K562 (cell line): ENCODE measurements at regions of chr2 and their contacts with region 1.

Region 1: DNA sequence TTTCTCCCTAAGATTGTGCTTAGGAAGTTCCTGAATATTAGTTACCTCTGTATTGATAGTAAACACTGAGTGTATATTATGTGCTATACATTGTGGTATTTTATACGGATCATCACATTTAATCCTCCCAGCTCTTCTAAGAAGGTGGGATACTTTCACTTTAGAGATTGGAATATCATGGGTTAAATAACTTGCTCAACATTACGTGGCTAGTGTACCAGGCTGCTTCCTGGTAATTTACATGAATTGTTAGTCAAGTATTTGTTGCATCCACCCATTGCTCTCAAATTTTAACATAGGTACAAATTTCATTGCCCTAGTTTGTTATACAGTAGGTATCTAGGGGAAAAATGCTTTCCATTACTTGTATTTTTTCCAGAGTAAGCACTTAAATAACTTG is 21.4 kb downstream of the FAM98A start:
- DNase-seq: no peak
- ATAC-seq: no peak
- H3K4me3 ChIP-seq: no peak overlapping the region
- H3K27ac ChIP-seq: no peak overlapping the region
- H3K4me1 ChIP-seq: no peaks in the 10 kb centered on the region
- H3K27me3 ChIP-seq: no peaks in the 10 kb centered on the region
- CTCF ChIP-seq: no peak
- EP300 ChIP-seq: no peak
- POLR2A ChIP-seq: no peak
- RAD21 ChIP-seq: no peak

Region 2: DNA sequence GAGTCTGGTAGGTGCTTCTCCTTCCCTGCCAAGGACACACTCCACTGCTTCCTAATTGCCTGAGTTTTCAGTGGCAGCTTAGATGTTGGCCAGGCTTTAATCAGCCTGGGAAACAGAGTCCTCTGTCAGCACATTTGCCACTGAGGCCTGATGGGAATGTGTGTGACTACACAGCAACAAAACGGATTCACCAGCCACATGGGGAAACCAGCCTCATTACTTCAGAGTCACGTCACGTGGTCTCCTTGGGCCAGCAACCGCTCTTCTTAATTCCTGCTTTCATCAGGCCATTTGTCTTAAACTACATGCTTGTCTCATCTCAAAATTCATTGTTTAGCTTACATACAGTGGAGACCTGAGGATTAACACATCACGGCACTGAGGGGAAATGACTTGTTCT is 724.8 kb before region 1 on chr2:
- CTCF ChIA-PET with region 1: no interaction called
- POLR2A ChIA-PET with region 1: no interaction called
- in situ Hi-C with region 1: no loop called
- intact Hi-C with region 1: no loop called
- DNase-seq: no peak
- ATAC-seq: no peak
- H3K4me3 ChIP-seq: no peak overlapping the region
- H3K27ac ChIP-seq: no peak overlapping the region
- H3K4me1 ChIP-seq: no peaks in the 10 kb centered on the region; a peak in 1 of 5 replicates
- H3K27me3 ChIP-seq: peaks cover 15 to 23% of the 10 kb centered on the region in 2 experiments; a peak in 4 of 5 replicates
- CTCF ChIP-seq: no peak
- EP300 ChIP-seq: no peak
- POLR2A ChIP-seq: no peak
- RAD21 ChIP-seq: no peak

Region 3: DNA sequence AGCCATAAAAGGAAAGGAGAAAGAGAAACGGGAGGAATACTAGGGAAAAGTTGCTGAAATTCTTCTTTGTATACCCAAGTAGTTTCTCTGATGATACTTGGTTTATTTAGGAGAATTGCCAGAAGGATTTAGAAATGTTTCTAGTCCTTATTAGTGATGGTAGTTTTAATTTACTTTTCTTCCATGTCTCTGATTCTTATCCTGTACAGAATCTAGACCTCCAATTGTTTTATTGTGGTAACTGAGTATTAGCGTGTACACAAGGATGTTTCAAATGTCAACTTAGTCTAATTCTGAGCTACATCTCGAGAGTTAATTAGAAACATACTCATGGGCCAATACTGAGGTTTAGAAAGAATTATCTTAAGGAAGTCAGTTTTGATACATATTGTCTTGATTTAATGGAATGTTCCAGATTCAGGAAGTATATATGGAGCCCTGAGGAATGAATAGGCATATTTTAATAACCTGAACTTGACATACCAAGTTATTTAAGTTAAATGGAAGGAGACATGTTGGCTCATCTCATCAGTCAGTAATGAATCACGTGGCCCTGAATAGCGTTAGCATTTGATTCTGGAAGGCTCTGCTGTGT is 411.3 kb before region 1 on chr2:
- CTCF ChIA-PET with region 1: no interaction called
- POLR2A ChIA-PET with region 1: no interaction called
- in situ Hi-C with region 1: no loop called
- intact Hi-C with region 1: no loop called
- DNase-seq: no peak
- ATAC-seq: no peak
- H3K4me3 ChIP-seq: no peak overlapping the region
- H3K27ac ChIP-seq: no peak overlapping the region
- H3K4me1 ChIP-seq: no peaks in the 10 kb centered on the region
- H3K27me3 ChIP-seq: no peaks in the 10 kb centered on the region
- CTCF ChIP-seq: no peak
- EP300 ChIP-seq: no peak
- POLR2A ChIP-seq: no peak
- RAD21 ChIP-seq: no peak

Region 4: GRCh38 chr2:33484042-33484621 is 93.5 kb before region 1 on chr2:
- CTCF ChIA-PET with region 1: no interaction called
- POLR2A ChIA-PET with region 1: no interaction called
- in situ Hi-C with region 1: loop called (anchors 5 kb)
- intact Hi-C with region 1: no loop called
- DNase-seq: no peak
- ATAC-seq: no peak
- H3K4me3 ChIP-seq: no peak overlapping the region
- H3K27ac ChIP-seq: no peak overlapping the region
- H3K4me1 ChIP-seq: peaks cover 0 to 7% of the 10 kb centered on the region in 2 experiments; a peak in 4 of 5 replicates
- H3K27me3 ChIP-seq: no peaks in the 10 kb centered on the region
- CTCF ChIP-seq: no peak
- EP300 ChIP-seq: no peak
- POLR2A ChIP-seq: no peak
- RAD21 ChIP-seq: no peak

Region 5: DNA sequence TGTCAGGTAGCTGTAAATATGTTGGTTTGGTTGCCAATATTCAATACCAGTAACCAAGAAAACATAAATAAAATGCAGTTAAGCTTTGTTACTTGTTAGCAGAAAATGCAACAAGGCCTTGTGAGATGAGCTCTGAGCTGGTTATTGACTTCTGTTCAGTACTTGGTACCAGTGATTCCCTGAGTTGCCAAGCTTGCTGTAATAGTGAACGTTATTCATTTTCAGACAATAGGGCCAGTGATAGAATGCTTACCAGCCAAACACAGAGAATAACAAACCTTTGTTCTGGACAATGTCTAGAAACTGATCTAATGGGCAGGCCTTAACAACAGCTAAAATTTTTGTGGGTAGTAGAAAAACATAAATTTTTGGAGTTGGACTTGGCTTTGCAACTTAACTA is 71.7 kb before region 1 on chr2:
- CTCF ChIA-PET with region 1: no interaction called
- POLR2A ChIA-PET with region 1: no interaction called
- in situ Hi-C with region 1: no loop called
- intact Hi-C with region 1: no loop called
- DNase-seq: no peak
- ATAC-seq: no peak
- H3K4me3 ChIP-seq: no peak overlapping the region
- H3K27ac ChIP-seq: no peak overlapping the region
- H3K4me1 ChIP-seq: no peaks in the 10 kb centered on the region
- H3K27me3 ChIP-seq: peaks cover 0 to 7% of the 10 kb centered on the region in 2 experiments; a peak in 4 of 5 replicates
- CTCF ChIP-seq: no peak
- EP300 ChIP-seq: no peak
- POLR2A ChIP-seq: no peak
- RAD21 ChIP-seq: no peak

Region 6: GRCh38 chr2:33628031-33628827 is 50.6 kb after region 1 on chr2:
- CTCF ChIA-PET with region 1: no interaction called
- POLR2A ChIA-PET with region 1: no interaction called
- in situ Hi-C with region 1: no loop called
- intact Hi-C with region 1: no loop called
- DNase-seq: no peak
- ATAC-seq: no peak
- H3K4me3 ChIP-seq: no peak overlapping the region
- H3K27ac ChIP-seq: no peak overlapping the region
- H3K4me1 ChIP-seq: no peaks in the 10 kb centered on the region
- H3K27me3 ChIP-seq: no peaks in the 10 kb centered on the region
- CTCF ChIP-seq: no peak
- EP300 ChIP-seq: no peak
- POLR2A ChIP-seq: no peak
- RAD21 ChIP-seq: no peak